Activated CD4-positive, alpha-beta T cell treated with anti-CD3 and anti-CD28 coated beads, Interleukin-2, amount 10 ng/mL, durations not matched to agents 24 days and 14 days (primary cell): ENCODE measurements at regions of chr19 and their contacts with region 1.

Region 1: GRCh38 chr19:29873024-29873800 is 61.4 kb downstream of the CCNE1 start:
- DNase-seq: peak; percentile 93
- H3K4me3 Mint-ChIP-seq: peak overlapping the region; percentile 73
- H3K27ac Mint-ChIP-seq: no peak overlapping the region
- H3K4me1 Mint-ChIP-seq: peaks cover 14% of the 10 kb centered on the region
- H3K27me3 Mint-ChIP-seq: peaks cover 24% of the 10 kb centered on the region

Region 2: DNA sequence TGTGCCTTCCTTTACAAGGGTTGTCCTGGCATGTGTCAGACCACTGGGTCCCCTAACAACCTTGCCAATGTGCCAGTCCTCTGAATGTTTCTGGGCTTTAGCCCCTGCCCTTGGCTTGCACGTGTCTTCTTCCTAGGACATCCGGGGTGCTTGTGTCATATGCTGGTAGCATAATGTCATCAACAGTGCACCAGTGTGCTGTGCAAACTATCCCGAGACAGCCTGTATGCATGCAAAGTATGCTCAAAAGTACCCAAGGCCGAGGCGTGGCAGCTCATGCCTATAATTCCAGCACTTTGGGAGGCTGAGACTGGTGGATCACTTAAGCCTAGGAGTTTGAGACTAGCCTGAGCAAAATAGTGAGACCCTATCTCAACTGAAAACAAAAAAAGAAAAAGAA is 137.4 kb before region 1 on chr19:
- intact Hi-C with region 1: loop called (anchors 1 kb)
- DNase-seq: no peak
- H3K4me3 Mint-ChIP-seq: no peak overlapping the region
- H3K27ac Mint-ChIP-seq: no peak overlapping the region
- H3K4me1 Mint-ChIP-seq: no peaks in the 10 kb centered on the region
- H3K27me3 Mint-ChIP-seq: peaks cover 13% of the 10 kb centered on the region

Region 3: DNA sequence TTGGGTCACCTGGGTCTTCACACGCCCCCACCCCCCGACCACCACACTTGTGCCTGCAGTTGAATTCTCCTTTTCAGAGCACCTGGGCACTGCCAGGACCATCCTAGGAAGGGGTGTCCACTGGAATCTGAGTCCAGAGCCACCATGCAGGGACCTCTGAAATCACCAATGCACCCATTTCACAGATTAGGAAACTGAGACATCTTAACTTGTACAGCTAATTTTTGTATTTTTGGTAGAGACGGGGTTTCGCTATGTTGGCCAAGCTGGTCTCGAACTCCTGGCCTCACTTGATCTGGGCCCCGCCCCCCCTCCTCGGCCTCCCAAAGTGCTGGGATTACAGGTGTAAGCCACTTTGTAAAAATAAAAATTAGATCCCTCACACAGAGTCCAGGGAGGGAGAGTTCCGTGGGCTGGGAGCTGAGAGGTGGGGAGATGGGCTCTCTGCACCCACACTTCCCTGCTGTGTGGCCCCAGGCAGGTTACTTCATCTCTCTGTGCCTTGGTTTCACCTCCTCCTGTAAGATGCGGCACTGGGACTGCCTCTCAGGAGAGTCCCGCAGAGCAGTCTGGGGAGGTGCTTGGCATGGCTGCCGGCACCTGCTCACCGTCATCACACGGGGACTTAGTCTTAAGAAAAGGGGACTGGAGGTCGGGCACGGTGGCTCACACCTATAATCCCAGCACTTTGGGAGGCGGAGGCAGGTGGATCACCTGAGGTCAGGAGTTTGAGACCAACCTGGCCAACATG is 112.3 kb before region 1 on chr19:
- intact Hi-C with region 1: loop called (anchors 1 kb)
- DNase-seq: no peak
- H3K4me3 Mint-ChIP-seq: peak overlapping the region; percentile 68
- H3K27ac Mint-ChIP-seq: no peak overlapping the region
- H3K4me1 Mint-ChIP-seq: peaks cover 3% of the 10 kb centered on the region
- H3K27me3 Mint-ChIP-seq: peaks cover 7% of the 10 kb centered on the region

Region 4: DNA sequence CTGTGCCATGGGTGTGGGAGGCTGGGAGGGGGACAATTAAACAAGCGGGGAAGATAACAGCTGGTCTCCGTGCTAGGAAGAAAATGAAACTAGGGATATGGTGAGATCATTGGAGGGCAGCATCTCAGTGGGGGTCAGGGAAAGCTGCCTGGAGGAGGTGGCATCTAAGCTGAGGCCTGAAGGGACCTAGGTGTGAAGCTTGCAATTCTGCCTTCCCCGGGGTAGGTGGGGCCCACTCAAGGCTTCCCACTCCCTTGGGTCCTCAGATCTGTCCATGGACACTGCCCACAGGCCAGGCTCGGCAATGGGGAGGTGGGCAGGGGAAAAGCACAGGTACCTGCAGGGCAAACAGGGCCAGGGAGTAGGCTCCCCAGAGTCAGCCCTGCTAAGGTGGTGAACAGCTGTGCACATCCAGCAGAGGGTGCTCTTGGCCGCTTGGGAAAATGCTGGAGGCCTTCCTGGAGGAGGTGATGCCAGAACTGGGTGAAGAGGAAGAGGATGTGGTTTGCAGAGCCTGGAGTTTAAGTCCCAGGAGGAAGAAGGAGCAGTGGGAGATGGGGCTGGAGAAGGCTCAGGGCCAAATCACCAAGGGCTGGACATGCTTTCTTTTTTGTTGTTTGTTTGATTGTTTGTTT is 87.1 kb before region 1 on chr19:
- intact Hi-C with region 1: loop called (anchors 2 kb)
- DNase-seq: peak; percentile 75
- H3K4me3 Mint-ChIP-seq: no peak overlapping the region
- H3K27ac Mint-ChIP-seq: no peak overlapping the region
- H3K4me1 Mint-ChIP-seq: peaks cover 6% of the 10 kb centered on the region
- H3K27me3 Mint-ChIP-seq: no peaks in the 10 kb centered on the region

Region 5: DNA sequence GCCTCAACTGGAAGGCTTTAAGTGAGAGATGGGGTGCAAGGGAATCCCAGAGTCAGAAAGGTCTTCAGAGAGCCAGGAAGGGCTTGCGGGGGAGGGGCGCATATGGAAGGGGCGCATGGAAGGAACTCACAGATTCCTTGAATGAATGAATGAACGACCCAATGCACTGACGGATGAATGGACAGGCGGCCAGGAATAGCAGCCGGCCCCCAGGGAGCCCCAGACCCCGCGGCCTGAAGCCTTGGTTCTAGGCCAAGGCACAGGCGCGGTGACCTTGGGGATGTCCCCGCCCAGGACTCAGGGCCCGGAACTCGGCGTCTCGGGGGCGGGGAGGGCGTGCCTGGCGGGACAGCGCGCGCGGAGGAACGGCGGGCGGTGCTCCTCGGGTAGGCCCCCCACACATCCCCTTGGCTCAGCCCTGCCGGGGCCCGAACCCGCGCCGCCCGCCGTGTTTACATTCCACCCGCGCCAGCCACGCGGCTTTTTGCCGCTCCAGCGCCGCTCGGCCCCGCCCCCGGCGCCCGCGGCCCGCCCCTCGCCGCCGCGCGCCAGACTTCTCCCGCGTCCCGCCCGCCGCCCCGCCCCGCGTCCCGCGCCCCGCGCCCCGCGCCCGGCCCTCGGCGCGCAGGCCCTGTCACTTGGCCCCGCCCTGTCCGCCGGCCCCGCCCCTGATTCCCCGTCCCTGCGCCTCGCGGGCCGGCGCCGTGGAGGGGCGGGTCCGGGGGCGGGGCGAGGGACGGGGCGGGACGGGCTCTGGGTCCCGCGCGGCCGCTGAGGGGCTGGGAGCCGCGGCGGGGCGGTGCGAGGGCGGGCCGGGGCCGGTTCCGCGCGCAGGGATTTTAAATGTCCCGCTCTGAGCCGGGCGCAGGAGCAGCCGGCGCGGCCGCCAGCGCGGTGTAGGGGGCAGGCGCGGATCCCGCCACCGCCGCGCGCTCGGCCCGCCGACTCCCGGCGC is 61.8 kb before region 1 on chr19 and contains the start of gene CCNE1:
- intact Hi-C with region 1: loop called (anchors 2 kb)
- DNase-seq: peak; percentile 98
- H3K4me3 Mint-ChIP-seq: peak within 1 kb of the TSS; percentile 93
- H3K27ac Mint-ChIP-seq: peak within 1 kb of the TSS; percentile 93
- H3K4me1 Mint-ChIP-seq: peaks cover 27% of the 10 kb centered on the region
- H3K27me3 Mint-ChIP-seq: no peaks in the 10 kb centered on the region
- total RNA-seq, gene CCNE1: 54.5 and 55.8 TPM in 2 replicates

Region 6: DNA sequence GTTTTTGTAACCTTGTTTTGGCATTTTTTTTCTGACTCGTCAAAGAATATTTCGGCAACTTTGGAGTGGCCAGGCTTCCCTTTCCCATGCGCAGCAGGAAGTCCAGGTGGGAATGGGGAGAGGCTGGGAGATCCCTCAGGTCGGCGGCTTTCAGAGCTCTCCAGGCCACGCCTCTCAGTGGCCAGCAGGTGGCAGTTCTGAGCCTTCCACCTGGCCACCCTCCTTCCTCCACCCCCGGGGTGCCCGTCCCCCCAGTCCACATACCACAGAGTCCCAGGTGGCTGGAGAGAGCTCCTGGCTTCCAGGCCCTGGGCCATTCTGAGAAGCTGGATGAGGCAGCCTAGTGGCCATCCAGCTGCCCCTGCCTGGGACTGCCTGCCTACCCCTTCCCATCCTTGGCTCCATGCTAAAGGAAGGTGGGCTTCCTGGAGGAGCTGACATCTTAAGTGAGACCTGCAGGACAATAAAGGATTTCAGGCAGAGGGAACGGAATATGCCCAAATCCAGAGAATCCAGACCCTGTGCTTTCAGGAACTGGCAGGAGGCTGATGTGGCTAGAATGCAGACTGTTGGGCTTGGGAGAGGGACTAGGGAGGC is 15.1 kb before region 1 on chr19:
- intact Hi-C with region 1: loop called (anchors 2 kb)
- DNase-seq: peak; percentile 81
- H3K4me3 Mint-ChIP-seq: no peak overlapping the region
- H3K27ac Mint-ChIP-seq: no peak overlapping the region
- H3K4me1 Mint-ChIP-seq: peaks cover 3% of the 10 kb centered on the region
- H3K27me3 Mint-ChIP-seq: peaks cover 7% of the 10 kb centered on the region